A549 (cell line): ENCODE measurements at regions of chr7 and their contacts with region 1.

Region 1: GRCh38 chr7:142535123-142535779 is 214.0 kb upstream of the PRSS1 start:
- DNase-seq: peak; percentile 68 to 76
- ATAC-seq: peak; percentile 97 to 100
- H3K4me3 ChIP-seq: no peak overlapping the region
- H3K27ac ChIP-seq: peak overlapping the region in 1 of 2 experiments; percentile 50; a peak in 2 of 6 replicates
- H3K4me1 ChIP-seq: peaks cover 14% of the 10 kb centered on the region; the same call in 2 of the 3 replicates
- CTCF ChIP-seq: peak; percentile 94
- EP300 ChIP-seq: no peak
- POLR2A ChIP-seq: no peak
- RAD21 ChIP-seq: peak; percentile 93 to 99

Region 2: DNA sequence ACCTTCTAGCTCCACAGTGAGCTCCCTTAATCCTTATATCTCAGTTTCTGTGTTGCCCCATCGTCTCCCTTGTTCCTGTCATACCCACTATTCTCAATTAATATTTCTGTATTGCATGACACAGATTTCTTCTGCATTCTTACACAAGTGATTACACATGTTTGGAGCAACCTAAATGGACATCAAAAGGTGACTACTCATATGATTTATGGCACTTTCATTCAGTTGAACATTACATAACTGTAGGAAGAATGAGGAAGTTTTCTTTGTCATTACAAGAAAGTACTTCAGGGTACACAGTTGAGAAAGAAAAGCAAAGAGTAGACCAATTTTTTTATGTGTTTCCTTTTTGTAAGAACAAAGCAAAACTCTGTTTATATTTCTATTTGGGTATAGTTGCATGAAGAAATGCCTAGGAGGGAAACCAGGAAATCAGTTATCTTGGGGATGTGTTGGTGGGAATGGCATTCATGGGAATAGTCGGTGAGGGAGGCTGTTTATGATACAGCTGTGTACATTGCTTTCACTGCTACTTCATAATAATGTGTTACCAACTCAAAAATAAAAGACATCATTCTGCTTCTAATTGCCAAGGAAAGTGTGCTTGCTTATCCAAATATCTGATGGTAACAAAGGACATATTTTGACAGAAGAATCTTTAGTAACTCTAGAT is 670.3 kb before region 1 on chr7:
- CTCF ChIA-PET with region 1: no interaction called
- POLR2A ChIA-PET with region 1: no interaction called
- DNase-seq: peak in 1 of 2 experiments; percentile 40
- ATAC-seq: 0 out of 6 replicates have a peak, but pooled peaks of 1 of the 2 experiments have one; percentile 23
- H3K4me3 ChIP-seq: no peak overlapping the region
- H3K27ac ChIP-seq: no peak overlapping the region
- H3K4me1 ChIP-seq: no peaks in the 10 kb centered on the region
- CTCF ChIP-seq: no peak
- EP300 ChIP-seq: no peak
- POLR2A ChIP-seq: no peak
- RAD21 ChIP-seq: no peak

Region 3: GRCh38 chr7:142548978-142549377 is 13.7 kb after region 1 on chr7:
- CTCF ChIA-PET with region 1: interaction called, 39 read pairs
- POLR2A ChIA-PET with region 1: no interaction called
- DNase-seq: no peak
- ATAC-seq: no peak
- H3K4me3 ChIP-seq: no peak overlapping the region
- H3K27ac ChIP-seq: 0 out of 6 replicates have a peak overlapping the region, but pooled peaks of 1 of the 2 experiments have one; percentile 3
- H3K4me1 ChIP-seq: no peaks in the 10 kb centered on the region
- CTCF ChIP-seq: no peak
- EP300 ChIP-seq: no peak
- POLR2A ChIP-seq: no peak
- RAD21 ChIP-seq: no peak

Region 4: DNA sequence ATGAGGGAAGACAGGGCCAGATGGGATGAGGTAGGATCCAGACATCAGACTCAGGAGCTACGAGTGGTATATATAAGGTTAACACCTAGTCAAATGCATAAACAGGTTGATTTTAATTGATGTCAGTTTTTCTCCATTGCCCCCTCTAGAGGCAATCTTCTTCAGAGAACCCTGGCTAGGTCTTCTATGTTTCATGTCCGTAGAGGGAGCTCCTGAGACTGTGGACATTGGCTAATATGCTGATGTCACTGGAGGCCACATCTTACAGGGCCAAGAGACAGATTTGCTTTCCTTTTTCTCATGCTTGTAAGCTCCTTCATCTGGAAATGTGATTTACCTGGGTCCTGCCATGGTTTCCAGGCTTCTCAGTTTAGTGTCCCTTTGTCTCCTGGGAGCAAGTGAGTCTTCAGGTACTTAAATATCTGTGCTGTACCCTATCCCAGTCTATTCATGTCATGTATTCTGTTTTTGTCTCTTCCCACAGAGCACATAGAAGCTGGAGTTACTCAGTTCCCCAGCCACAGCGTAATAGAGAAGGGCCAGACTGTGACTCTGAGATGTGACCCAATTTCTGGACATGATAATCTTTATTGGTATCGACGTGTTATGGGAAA is 52.4 kb after region 1 on chr7:
- CTCF ChIA-PET with region 1: interaction called, 80 read pairs
- POLR2A ChIA-PET with region 1: no interaction called
- DNase-seq: peak; percentile 85 to 88
- ATAC-seq: peak; percentile 92 to 97
- H3K4me3 ChIP-seq: no peak overlapping the region
- H3K27ac ChIP-seq: peak overlapping the region; percentile 29 to 69; a peak in 4 of 6 replicates
- H3K4me1 ChIP-seq: peaks cover 24% of the 10 kb centered on the region
- CTCF ChIP-seq: peak; percentile 86
- EP300 ChIP-seq: no peak
- POLR2A ChIP-seq: no peak
- RAD21 ChIP-seq: peak; percentile 46 to 50; a peak in 4 of 5 replicates

Region 5: DNA sequence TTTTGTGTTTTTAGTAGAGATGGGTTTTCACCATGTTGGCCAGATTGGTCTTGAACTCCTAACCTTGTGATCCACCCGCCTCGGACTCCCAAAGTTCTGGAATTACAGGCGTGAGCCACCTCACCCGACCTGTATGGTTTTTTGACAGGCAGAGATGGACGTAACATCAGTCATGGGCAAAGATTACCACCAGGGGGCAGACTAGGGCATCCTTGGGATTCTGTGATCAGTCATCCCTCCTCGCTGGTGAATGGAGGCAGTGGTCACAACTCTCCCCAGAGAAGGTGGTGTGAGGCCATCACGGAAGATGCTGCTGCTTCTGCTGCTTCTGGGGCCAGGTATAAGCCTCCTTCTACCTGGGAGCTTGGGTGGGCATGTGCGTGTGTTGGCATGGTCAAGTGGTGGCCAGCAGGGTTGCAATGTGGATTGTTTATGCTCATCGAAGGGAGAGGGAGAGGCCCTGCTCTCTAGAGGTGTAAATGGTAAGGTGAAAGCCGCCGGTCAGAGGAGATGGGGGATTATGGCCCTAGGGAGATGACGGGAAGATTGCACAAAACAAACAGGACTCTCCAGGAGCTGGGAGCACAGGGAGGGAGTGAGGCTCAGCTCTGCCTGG is 91.3 kb after region 1 on chr7:
- CTCF ChIA-PET with region 1: interaction called, 41 read pairs
- POLR2A ChIA-PET with region 1: no interaction called
- DNase-seq: peak; percentile 16 to 48
- ATAC-seq: peak; percentile 74 to 93; a peak in 4 of 6 replicates
- H3K4me3 ChIP-seq: no peak overlapping the region
- H3K27ac ChIP-seq: no peak overlapping the region
- H3K4me1 ChIP-seq: no peaks in the 10 kb centered on the region
- CTCF ChIP-seq: peak; percentile 43
- EP300 ChIP-seq: no peak
- POLR2A ChIP-seq: no peak
- RAD21 ChIP-seq: peak in 1 of 2 experiments; percentile 32; a peak in 2 of 5 replicates

Region 6: GRCh38 chr7:142796608-142797385 is 261.5 kb after region 1 on chr7:
- CTCF ChIA-PET with region 1: interaction called, 11 read pairs
- POLR2A ChIA-PET with region 1: no interaction called
- DNase-seq: no peak
- ATAC-seq: peak in 1 of 2 experiments; percentile 43; a peak in 3 of 6 replicates
- H3K4me3 ChIP-seq: no peak overlapping the region
- H3K27ac ChIP-seq: no peak overlapping the region
- H3K4me1 ChIP-seq: no peaks in the 10 kb centered on the region
- CTCF ChIP-seq: no peak
- EP300 ChIP-seq: no peak
- POLR2A ChIP-seq: no peak
- RAD21 ChIP-seq: no peak